Aorta (tissue), 5 donors: ENCODE measurements at regions of chr15 and their contacts with region 1.

Region 1: GRCh38 chr15:42465520-42466259 is 25.3 kb downstream of the ZNF106 start:
- DNase-seq: no peak
- ATAC-seq: no peak
- H3K4me3 ChIP-seq: no peak overlapping the region
- H3K27ac ChIP-seq: peak overlapping the region in 1 of 2 donors; percentile 48
- H3K4me1 ChIP-seq: no peaks in the 10 kb centered on the region
- H3K27me3 ChIP-seq: no peaks in the 10 kb centered on the region

Region 2: GRCh38 chr15:42427429-42428223 is 38.1 kb before region 1 on chr15:
- intact Hi-C with region 1: loop called in 1 of 2 experiments (anchors 5 kb)
- DNase-seq: no peak
- ATAC-seq: peak; percentile 48
- H3K4me3 ChIP-seq: no peak overlapping the region
- H3K27ac ChIP-seq: peak overlapping the region; percentile 85 to 96
- H3K4me1 ChIP-seq: peaks cover 0 to 3% of the 10 kb centered on the region in 2 donors
- H3K27me3 ChIP-seq: no peaks in the 10 kb centered on the region

Region 3: GRCh38 chr15:42772144-42772543 is 306.5 kb after region 1 on chr15:
- intact Hi-C with region 1: no loop called
- DNase-seq: peak in 1 of 2 donors; percentile 61
- ATAC-seq: peak; percentile 56
- H3K4me3 ChIP-seq: no peak overlapping the region
- H3K27ac ChIP-seq: peak overlapping the region in 1 of 2 donors; percentile 81
- H3K4me1 ChIP-seq: peaks cover 2 to 11% of the 10 kb centered on the region in 2 donors
- H3K27me3 ChIP-seq: no peaks in the 10 kb centered on the region